ENCODE measurements at regions of chr15 and their contacts with region 1.

Region 1: GRCh38 chr15:88348579-88349230 is 92.2 kb upstream of the NTRK3 start:
- DNase-seq: no peak
- H3K4me3 ChIP-seq: no peak overlapping the region
- H3K27ac ChIP-seq: no peak overlapping the region
- H3K4me1 ChIP-seq: no peaks in the 10 kb centered on the region
- H3K27me3 ChIP-seq: peaks cover 8% of the 10 kb centered on the region; the same call in 1 of the 2 replicates
- CTCF ChIP-seq: no peak

Region 2: GRCh38 chr15:87805128-87805820 is 543.4 kb before region 1 on chr15:
- CTCF ChIA-PET with region 1: no interaction called
- POLR2A ChIA-PET with region 1: no interaction called
- intact Hi-C with region 1: loop called (anchors 10 kb)
- DNase-seq: no peak
- H3K4me3 ChIP-seq: no peak overlapping the region
- H3K27ac ChIP-seq: no peak overlapping the region
- H3K4me1 ChIP-seq: no peaks in the 10 kb centered on the region
- H3K27me3 ChIP-seq: no peaks in the 10 kb centered on the region
- CTCF ChIP-seq: no peak

Region 3: DNA sequence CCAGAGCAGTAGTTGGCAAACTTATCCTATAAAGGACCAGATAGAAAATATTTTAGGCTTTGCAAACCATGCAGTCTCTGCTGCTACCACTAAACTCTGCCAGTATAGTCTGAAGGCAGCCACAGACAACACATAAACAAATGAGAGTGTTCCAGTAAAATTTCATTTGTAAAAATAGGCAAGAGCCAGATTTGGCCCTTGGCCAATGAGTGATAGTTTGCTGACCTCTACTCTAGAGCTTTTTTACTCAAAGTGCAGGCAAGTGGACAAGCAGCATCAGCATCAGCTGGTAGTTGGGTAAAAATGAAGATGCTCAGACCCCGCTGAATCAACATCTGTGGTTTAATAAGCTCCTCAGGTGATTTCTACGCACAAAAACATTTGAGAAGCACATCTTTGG is 361.9 kb before region 1 on chr15:
- CTCF ChIA-PET with region 1: no interaction called
- POLR2A ChIA-PET with region 1: no interaction called
- intact Hi-C with region 1: no loop called
- DNase-seq: no peak
- H3K4me3 ChIP-seq: no peak overlapping the region
- H3K27ac ChIP-seq: no peak overlapping the region
- H3K4me1 ChIP-seq: no peaks in the 10 kb centered on the region
- H3K27me3 ChIP-seq: no peaks in the 10 kb centered on the region
- CTCF ChIP-seq: no peak

Measured in PC-9 (cell line).